PC-9 (cell line): ENCODE measurements at regions of chr16 and their contacts with region 1.

Region 1: GRCh38 chr16:13957197-13958078 is 37.5 kb downstream of the ERCC4 start:
- DNase-seq: peak; percentile 86 to 98
- H3K4me3 ChIP-seq: peak overlapping the region; percentile 51
- H3K27ac ChIP-seq: peak overlapping the region; percentile 95
- H3K4me1 ChIP-seq: peaks cover 72% of the 10 kb centered on the region
- H3K27me3 ChIP-seq: no peaks in the 10 kb centered on the region
- CTCF ChIP-seq: no peak

Region 2: DNA sequence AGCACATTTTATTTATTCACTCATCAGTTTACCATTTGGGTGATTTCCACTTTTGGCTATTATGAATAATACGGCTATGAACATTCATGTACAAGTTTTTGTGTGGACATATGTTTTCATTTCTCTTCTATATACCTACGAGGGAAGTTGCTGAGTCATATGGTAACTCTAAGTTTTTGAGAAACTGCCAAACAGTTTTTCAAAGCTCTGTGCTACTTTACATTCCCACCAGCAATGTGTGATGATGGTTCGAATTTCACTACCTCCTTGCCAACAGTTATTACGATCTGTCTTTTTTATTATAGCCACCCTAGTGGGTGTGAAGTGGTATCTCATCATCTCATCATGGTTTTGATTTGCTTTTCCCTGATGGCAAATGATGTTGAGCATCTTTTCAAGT is 50.0 kb after region 1 on chr16:
- CTCF ChIA-PET with region 1: no interaction called
- POLR2A ChIA-PET with region 1: no interaction called
- intact Hi-C with region 1: loop called (anchors 5 kb)
- DNase-seq: no peak
- H3K4me3 ChIP-seq: no peak overlapping the region
- H3K27ac ChIP-seq: no peak overlapping the region
- H3K4me1 ChIP-seq: peaks cover 23% of the 10 kb centered on the region
- H3K27me3 ChIP-seq: no peaks in the 10 kb centered on the region
- CTCF ChIP-seq: no peak

Region 3: GRCh38 chr16:14050297-14051036 is 93.0 kb after region 1 on chr16:
- CTCF ChIA-PET with region 1: no interaction called
- POLR2A ChIA-PET with region 1: no interaction called
- intact Hi-C with region 1: loop called (anchors 5 kb)
- DNase-seq: peak; percentile 76 to 82
- H3K4me3 ChIP-seq: peak overlapping the region; percentile 22; the same call in 1 of the 2 replicates
- H3K27ac ChIP-seq: peak overlapping the region; percentile 33
- H3K4me1 ChIP-seq: peaks cover 17% of the 10 kb centered on the region
- H3K27me3 ChIP-seq: no peaks in the 10 kb centered on the region
- CTCF ChIP-seq: no peak

Region 4: DNA sequence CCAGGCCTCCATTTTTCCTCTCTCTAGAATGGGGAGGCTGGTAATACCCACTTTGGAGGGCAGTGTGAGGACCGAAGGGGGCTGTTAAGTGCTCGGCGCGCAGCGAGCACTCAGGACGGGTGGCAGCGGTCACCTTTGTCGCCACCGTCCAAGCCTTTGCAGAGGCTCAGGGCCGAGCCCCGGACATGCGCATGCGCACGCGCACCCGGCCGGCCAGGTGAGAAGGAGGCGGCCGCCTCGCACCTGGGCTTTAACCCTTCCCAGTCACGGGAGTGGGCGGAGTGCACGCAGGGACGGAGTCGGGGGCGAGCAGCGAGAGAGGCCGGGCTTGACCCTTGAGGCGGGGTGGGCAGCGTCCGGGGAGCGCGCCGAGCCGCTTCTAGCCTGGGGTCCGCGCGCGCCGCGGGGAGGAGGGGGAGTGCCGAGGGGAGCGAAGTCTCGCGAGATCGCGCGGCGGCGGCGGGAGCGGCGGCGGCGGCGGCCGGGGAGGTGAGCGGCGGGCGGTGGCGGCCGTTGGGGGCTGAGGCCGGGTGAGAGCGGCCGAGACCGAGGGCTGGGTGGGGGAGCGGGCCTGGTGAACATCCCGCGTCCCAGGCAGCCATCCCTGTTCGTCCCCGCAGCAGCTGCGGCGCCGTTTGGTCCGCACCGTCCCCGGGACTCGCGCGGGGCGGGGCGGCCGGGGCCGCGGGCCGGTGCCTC is 113.6 kb after region 1 on chr16 and contains the start of gene MRTFB:
- CTCF ChIA-PET with region 1: no interaction called
- POLR2A ChIA-PET with region 1: interaction called, 3 read pairs
- intact Hi-C with region 1: loop called (anchors 1 kb)
- DNase-seq: peak; percentile 73 to 95
- H3K4me3 ChIP-seq: peak within 1 kb of the TSS; percentile 95
- H3K27ac ChIP-seq: peak within 1 kb of the TSS; percentile 35
- H3K4me1 ChIP-seq: peaks cover 29% of the 10 kb centered on the region
- H3K27me3 ChIP-seq: no peaks in the 10 kb centered on the region
- CTCF ChIP-seq: no peak
- total RNA-seq, gene MRTFB: 47.3 and 71.5 TPM in 2 replicates